WTC11 (cell line): ENCODE measurements at regions of chr12 and their contacts with region 1.

Region 1: DNA sequence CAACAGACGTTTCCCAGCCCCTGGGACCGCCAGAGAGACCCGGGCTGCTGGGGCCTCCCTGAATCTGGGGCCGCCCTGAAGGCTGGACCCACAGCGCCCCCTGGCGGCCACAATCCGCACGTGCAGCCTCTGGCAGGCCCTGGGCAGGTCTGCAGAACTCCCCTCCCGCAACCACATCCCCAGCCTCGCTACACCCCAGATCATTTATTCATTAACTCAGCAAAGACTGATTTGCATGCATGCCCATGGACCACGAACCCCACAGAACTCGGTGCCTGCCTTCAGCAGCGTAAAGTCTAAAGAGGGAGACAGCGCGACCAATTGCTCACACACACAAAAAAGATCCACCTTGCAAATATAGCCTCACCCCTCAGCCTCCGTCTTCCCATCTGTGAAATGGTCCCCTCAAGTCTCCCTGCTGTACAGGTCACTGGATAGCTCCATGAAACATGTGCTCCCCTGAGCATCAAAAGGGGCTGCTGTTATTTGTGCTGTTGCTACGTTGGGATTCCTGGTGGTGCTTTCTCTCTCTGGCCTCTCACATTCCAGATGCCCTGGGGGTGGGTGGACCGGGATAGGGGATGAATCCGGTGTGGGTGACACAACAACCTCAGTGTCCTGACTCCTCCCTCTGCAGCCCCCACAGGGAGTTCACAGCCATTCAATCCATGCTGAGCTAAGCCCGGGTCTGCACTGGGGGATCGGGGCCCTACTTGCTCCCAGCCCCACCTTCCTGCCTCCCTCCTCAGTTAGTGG is 96.4 kb downstream of the SCARB1 start:
- DNase-seq: peak; percentile 91
- ATAC-seq: peak; percentile 87
- H3K4me3 Mint-ChIP-seq: no peak overlapping the region
- H3K27ac Mint-ChIP-seq: no peak overlapping the region
- H3K4me1 Mint-ChIP-seq: peaks cover 4% of the 10 kb centered on the region
- H3K27me3 Mint-ChIP-seq: peaks cover 14% of the 10 kb centered on the region
- CTCF ChIP-seq: peak; percentile 100

Region 2: GRCh38 chr12:124646385-124647230 is 120.6 kb before region 1 on chr12:
- CTCF ChIA-PET with region 1: no interaction called
- POLR2A ChIA-PET with region 1: no interaction called
- DNase-seq: no peak
- ATAC-seq: peak; percentile 34
- H3K4me3 Mint-ChIP-seq: no peak overlapping the region
- H3K27ac Mint-ChIP-seq: no peak overlapping the region
- H3K4me1 Mint-ChIP-seq: peaks cover 16% of the 10 kb centered on the region
- H3K27me3 Mint-ChIP-seq: peaks cover 6% of the 10 kb centered on the region
- CTCF ChIP-seq: no peak

Region 3: GRCh38 chr12:124734224-124734788 is 32.9 kb before region 1 on chr12:
- CTCF ChIA-PET with region 1: interaction called, 15 read pairs
- POLR2A ChIA-PET with region 1: no interaction called
- DNase-seq: peak; percentile 75
- ATAC-seq: peak; percentile 91
- H3K4me3 Mint-ChIP-seq: no peak overlapping the region; the same call in 1 of the 2 replicates
- H3K27ac Mint-ChIP-seq: peak overlapping the region; percentile 24
- H3K4me1 Mint-ChIP-seq: peaks cover 22% of the 10 kb centered on the region
- H3K27me3 Mint-ChIP-seq: peaks cover 3% of the 10 kb centered on the region; the same call in 1 of the 2 replicates
- CTCF ChIP-seq: no peak

Region 4: GRCh38 chr12:124780752-124781685 is 13.8 kb after region 1 on chr12:
- CTCF ChIA-PET with region 1: interaction called, 10 read pairs
- POLR2A ChIA-PET with region 1: no interaction called
- DNase-seq: no peak
- ATAC-seq: peak; percentile 35; the same call in 1 of the 2 replicates
- H3K4me3 Mint-ChIP-seq: no peak overlapping the region
- H3K27ac Mint-ChIP-seq: no peak overlapping the region
- H3K4me1 Mint-ChIP-seq: no peaks in the 10 kb centered on the region
- H3K27me3 Mint-ChIP-seq: no peaks in the 10 kb centered on the region; the same call in 1 of the 2 replicates
- CTCF ChIP-seq: no peak

Region 5: GRCh38 chr12:124804011-124804621 is 36.9 kb after region 1 on chr12:
- CTCF ChIA-PET with region 1: interaction called, 10 read pairs
- POLR2A ChIA-PET with region 1: no interaction called
- DNase-seq: peak; percentile 42
- ATAC-seq: peak; percentile 84
- H3K4me3 Mint-ChIP-seq: no peak overlapping the region
- H3K27ac Mint-ChIP-seq: peak overlapping the region; percentile 81; the same call in 1 of the 2 replicates
- H3K4me1 Mint-ChIP-seq: peaks cover 7% of the 10 kb centered on the region
- H3K27me3 Mint-ChIP-seq: no peaks in the 10 kb centered on the region
- CTCF ChIP-seq: no peak

Region 6: DNA sequence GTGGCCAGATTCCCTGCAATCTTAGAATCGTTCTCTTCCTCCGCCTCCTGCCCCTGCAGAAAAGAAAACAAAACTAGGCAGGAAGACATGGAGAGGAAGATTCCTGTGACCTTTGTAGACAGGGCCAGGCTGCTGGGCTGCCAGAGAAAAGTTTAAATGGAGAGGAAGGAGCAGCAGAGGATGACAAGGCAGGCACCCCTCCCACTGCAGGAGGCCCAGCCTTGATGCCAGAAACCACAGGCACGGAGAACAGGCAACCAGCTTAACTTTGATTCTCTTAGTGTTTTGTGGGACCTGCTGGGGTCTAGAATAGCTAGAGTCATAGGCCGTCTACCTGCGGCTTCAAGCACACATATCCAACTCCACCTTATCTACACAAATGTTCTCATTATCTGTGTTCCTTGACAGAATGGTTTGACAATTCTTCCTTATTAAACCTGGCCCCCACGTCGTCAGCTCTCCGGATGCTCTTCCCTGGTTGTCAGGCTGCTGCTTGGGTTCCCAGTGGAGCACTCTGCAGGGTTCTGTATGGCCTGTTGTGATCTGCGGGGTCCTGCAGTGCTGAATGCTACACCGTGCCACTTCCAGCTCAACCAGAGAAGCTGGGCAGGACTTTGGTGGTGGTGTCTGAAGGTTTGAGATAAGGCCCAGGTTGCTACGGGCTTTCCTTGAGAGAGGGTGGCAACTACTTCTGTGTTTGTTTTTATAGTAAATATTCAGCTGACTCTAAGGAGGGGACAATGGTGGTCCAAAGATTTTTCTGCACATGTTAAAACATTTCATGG is 907.5 kb after region 1 on chr12:
- CTCF ChIA-PET with region 1: no interaction called
- POLR2A ChIA-PET with region 1: no interaction called
- DNase-seq: no peak
- ATAC-seq: no peak
- H3K4me3 Mint-ChIP-seq: no peak overlapping the region
- H3K27ac Mint-ChIP-seq: no peak overlapping the region
- H3K4me1 Mint-ChIP-seq: no peaks in the 10 kb centered on the region
- H3K27me3 Mint-ChIP-seq: no peaks in the 10 kb centered on the region; the same call in 1 of the 2 replicates
- CTCF ChIP-seq: no peak